Endothelial cell of umbilical vein (primary cell): ENCODE measurements at regions of chr10 and their contacts with region 1.

Region 1: GRCh38 chr10:127945335-127945734 is 38.4 kb downstream of the PTPRE start:
- DNase-seq: peak; percentile 94
- H3K4me3 ChIP-seq: no peak overlapping the region
- H3K27ac ChIP-seq: peak overlapping the region; percentile 92
- H3K4me1 ChIP-seq: peaks cover 77% of the 10 kb centered on the region
- H3K27me3 ChIP-seq: no peaks in the 10 kb centered on the region
- CTCF ChIP-seq: no peak
- POLR2A ChIP-seq: peak; percentile 63

Region 2: GRCh38 chr10:127919418-127920271 is 25.7 kb before region 1 on chr10:
- CTCF ChIA-PET with region 1: interaction called, 8 read pairs
- POLR2A ChIA-PET with region 1: no interaction called
- dilution Hi-C with region 1: no loop called
- intact Hi-C with region 1: loop called (anchors 1 kb)
- DNase-seq: peak; percentile 83
- H3K4me3 ChIP-seq: no peak overlapping the region
- H3K27ac ChIP-seq: peak overlapping the region; percentile 31
- H3K4me1 ChIP-seq: peaks cover 53% of the 10 kb centered on the region
- H3K27me3 ChIP-seq: no peaks in the 10 kb centered on the region
- CTCF ChIP-seq: peak; percentile 57 to 61
- POLR2A ChIP-seq: no peak

Region 3: DNA sequence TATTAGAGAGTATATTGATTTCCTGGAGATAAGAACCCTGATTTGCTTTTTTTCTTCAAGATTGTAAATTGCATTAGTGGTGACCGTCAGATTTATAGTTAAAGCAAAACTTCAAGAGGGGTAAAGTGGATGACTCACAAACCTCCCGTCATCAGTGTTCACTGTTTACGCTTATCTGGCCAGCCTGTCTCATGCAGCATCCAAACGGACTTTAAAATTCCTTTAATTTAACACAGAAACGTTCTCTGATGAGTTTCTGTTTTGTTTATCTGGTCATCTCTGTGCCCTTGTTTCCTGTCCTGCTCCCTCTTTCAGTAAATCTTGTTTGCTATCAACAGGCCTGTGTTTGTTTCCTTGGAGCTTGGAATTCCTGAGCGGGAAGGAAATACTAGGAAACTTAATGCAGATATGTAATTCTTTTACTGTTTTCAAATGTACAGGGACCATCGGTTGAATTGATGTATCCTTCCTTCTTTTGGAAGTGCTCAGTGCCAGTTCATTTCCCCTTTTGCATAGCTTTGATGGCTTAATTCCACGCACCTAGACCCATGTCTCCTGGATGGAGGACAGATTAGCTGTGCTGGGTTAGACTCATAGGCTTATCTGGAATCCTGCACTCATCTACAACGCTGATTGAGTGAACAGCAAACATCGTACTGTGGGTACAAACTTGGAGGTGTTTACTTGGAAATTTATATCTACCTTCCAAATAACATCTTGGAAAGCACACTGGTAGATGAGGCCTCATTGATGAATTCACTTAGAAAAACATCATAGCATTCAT is 17.1 kb before region 1 on chr10:
- CTCF ChIA-PET with region 1: interaction called, 11 read pairs
- POLR2A ChIA-PET with region 1: no interaction called
- dilution Hi-C with region 1: no loop called
- intact Hi-C with region 1: loop called (anchors 1 kb)
- DNase-seq: peak; percentile 82
- H3K4me3 ChIP-seq: peak overlapping the region in 1 of 3 experiments; percentile 23
- H3K27ac ChIP-seq: peak overlapping the region; percentile 84
- H3K4me1 ChIP-seq: peaks cover 41% of the 10 kb centered on the region
- H3K27me3 ChIP-seq: no peaks in the 10 kb centered on the region
- CTCF ChIP-seq: no peak
- POLR2A ChIP-seq: no peak

Region 4: DNA sequence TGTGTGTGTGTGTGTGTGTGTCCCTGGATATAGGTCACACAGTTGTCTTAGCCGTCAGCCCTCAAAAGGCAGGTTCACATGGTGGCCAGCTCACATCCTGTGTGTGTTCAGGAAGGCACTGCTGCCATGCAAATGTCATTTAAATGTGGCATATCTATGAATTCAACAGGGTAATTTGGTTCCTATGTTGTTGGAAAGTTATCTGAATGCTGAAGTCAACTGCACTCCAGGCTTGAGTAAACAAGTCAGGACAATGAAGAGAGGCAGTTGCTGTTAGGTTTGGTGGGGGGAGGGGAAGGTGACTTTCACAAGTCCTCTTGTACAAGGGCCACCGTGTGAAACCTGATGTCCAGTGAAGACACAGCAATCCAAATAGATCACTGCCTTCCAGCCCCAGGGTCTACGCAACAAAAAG is 22.7 kb after region 1 on chr10:
- CTCF ChIA-PET with region 1: no interaction called
- POLR2A ChIA-PET with region 1: no interaction called
- dilution Hi-C with region 1: no loop called
- intact Hi-C with region 1: loop called (anchors 1 kb)
- DNase-seq: peak; percentile 62
- H3K4me3 ChIP-seq: no peak overlapping the region
- H3K27ac ChIP-seq: peak overlapping the region; percentile 70
- H3K4me1 ChIP-seq: peaks cover 20% of the 10 kb centered on the region
- H3K27me3 ChIP-seq: no peaks in the 10 kb centered on the region
- CTCF ChIP-seq: no peak
- POLR2A ChIP-seq: no peak

Region 5: DNA sequence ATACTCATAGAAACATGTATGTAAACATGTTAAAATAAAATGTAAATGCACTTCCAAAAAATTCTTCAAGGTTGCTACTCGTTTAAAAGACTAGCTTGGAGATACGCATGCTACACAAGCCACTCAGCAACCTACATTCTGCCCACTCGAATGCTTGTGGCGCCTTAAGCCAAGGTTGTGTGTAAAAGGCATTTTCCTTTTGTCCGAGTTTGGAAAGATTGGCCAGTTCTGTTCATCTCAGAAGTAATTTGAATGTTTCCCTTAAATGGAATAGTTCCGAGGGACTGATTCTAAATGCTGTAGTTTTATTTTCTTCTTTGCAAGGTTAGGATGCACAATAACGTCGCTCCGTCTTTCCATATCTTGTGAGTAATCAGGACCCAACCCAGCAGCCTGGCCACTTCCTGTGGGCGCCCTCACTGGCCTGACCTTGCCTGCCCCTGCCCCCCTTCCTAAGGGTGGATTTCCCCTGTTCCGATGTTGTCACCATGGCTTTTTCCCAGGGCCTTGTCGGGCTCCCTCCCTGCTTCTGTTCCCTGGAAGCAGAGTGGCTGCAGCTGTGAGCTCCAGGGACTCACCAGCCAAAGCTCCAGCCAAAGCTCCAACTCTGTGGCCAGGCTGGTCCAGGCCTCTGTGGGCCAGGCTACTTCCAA is 32.1 kb after region 1 on chr10:
- CTCF ChIA-PET with region 1: interaction called, 6 read pairs
- POLR2A ChIA-PET with region 1: no interaction called
- dilution Hi-C with region 1: no loop called
- intact Hi-C with region 1: loop called (anchors 1 kb)
- DNase-seq: peak; percentile 96
- H3K4me3 ChIP-seq: peak overlapping the region in 1 of 3 experiments; percentile 20
- H3K27ac ChIP-seq: peak overlapping the region; percentile 79
- H3K4me1 ChIP-seq: peaks cover 42% of the 10 kb centered on the region
- H3K27me3 ChIP-seq: no peaks in the 10 kb centered on the region
- CTCF ChIP-seq: no peak
- POLR2A ChIP-seq: peak; percentile 54

Region 6: GRCh38 chr10:127990846-127991542 is 45.7 kb after region 1 on chr10:
- CTCF ChIA-PET with region 1: interaction called, 3 read pairs
- POLR2A ChIA-PET with region 1: no interaction called
- dilution Hi-C with region 1: no loop called
- intact Hi-C with region 1: loop called (anchors 1 kb)
- DNase-seq: peak; percentile 97
- H3K4me3 ChIP-seq: peak overlapping the region in 1 of 3 experiments; percentile 83
- H3K27ac ChIP-seq: peak overlapping the region; percentile 94
- H3K4me1 ChIP-seq: peaks cover 72% of the 10 kb centered on the region
- H3K27me3 ChIP-seq: no peaks in the 10 kb centered on the region
- CTCF ChIP-seq: no peak
- POLR2A ChIP-seq: peak; percentile 60